ENCODE measurements at regions of chr6 and their contacts with region 1.

Region 1: DNA sequence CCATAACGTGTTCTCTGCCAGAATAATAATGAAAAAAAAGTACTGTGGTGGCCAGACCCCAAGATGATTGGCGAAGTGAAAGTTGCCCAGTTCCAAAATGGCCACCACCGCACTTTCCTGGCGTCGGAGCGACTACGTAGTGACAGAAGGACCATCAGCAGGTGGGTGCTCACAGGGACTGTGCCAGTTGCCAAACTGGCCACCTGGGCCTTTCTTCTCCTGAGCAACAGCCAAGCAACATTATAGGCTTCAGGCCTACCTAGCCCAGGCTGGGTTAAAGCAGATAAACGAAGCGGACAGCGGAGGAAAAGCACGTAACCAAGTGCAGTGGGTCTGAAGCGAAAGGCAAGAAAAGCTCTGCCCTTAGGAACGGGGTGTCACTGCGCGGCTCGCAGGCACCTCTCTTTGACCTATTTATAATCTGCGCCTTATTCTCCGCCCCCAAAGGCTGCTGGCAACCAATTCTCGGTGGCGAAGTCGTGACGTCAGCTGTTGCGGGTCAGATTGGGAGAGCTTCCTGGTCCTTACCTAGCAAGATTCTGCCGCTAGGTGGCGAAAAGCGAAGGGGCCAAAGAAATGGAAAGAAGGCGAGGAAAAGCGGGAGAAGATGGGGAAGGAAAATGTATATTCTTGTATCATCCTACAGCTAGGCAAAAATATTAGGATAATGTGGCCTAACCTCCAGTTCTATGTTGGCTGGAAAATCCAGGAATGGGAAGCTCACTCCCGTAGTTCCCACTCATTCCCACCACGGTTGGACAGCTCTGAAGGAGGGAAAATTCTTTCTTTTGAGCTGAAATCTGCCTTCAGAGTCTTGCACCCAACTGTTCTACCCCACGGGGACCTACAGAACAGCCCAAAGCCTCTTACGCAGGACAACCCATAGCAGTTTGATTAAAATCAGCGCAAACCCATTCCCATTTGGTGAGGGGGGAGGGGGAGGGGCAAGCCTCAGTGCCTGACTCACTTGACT is 6.9 kb upstream of the MOG start:
- DNase-seq: peak; percentile 99
- ATAC-seq: peak; percentile 94
- H3K4me3 ChIP-seq: peak overlapping the region; percentile 72
- H3K27ac ChIP-seq: no peak overlapping the region
- H3K4me1 ChIP-seq: no peaks in the 10 kb centered on the region; the same call in none of the 2 replicates
- H3K27me3 ChIP-seq: no peaks in the 10 kb centered on the region
- CTCF ChIP-seq: peak; percentile 90

Region 2: DNA sequence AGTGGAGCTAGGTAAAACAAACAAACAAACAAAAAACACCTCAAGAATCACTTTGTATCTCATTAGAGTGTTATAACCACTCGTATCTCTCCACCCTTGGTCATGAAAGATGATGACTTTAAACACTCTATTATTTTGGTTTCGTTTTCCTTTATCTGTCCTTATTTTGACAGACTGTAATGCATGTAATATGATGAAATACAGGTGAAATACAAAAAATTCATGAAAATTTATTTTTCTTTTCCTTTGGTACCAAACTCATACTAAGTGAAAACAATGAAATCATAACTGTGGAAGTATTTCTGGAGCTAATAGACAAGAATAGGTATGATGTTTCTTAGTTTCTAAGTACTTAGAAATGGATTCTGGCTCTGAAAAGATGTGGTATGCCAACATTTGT is 250.5 kb before region 1 on chr6:
- CTCF ChIA-PET with region 1: no interaction called
- POLR2A ChIA-PET with region 1: no interaction called
- intact Hi-C with region 1: no loop called
- DNase-seq: no peak
- ATAC-seq: no peak
- H3K4me3 ChIP-seq: no peak overlapping the region
- H3K27ac ChIP-seq: no peak overlapping the region
- H3K4me1 ChIP-seq: no peaks in the 10 kb centered on the region
- H3K27me3 ChIP-seq: peaks cover 34% of the 10 kb centered on the region
- CTCF ChIP-seq: no peak

Region 3: DNA sequence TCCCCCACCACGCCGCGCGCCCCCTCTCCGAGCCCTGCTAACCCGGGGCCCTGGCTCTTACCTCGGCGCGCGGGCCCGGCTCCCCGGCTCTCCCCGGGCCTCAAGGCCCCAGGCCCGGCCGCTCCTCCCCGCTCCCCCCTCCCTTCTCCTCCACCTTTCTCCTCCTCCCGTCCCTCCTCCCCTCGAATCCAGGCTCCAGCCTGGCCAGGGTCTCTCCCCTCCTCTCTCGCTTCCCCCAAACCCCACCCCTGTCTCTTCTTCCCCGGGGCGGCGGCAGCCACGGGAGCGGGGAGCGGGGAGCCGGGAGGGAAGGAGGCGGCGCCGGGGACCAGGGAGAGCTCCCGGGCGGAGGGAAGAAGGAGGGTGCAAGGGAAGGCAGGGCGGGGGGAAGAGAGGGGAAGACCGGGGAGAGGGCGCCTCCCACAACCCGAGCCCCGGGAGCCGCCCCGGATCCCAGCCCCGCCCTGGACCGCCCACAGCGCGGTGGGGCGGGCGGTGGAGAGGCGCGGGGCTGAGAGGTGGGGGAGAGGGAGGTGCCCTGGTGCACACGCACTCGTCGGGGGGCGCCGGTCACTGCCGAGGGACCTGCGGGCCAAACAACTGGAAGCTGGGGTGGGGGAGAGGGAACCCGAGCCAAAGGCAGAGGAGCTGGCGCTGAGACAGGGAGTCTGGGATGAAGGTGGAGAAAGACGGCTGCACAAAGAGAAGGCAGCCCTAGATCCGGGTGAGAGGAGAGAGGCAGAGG is 17.0 kb before region 1 on chr6 and contains the start of gene GABBR1:
- CTCF ChIA-PET with region 1: interaction called, 16 read pairs
- POLR2A ChIA-PET with region 1: interaction called, 14 read pairs
- intact Hi-C with region 1: loop called (anchors 2 kb)
- DNase-seq: peak; percentile 77
- ATAC-seq: peak; percentile 79
- H3K4me3 ChIP-seq: peak within 1 kb of the TSS; percentile 95
- H3K27ac ChIP-seq: no peak within 1 kb of the TSS
- H3K4me1 ChIP-seq: peaks cover 20% of the 10 kb centered on the region
- H3K27me3 ChIP-seq: no peaks in the 10 kb centered on the region
- CTCF ChIP-seq: no peak
- total RNA-seq, gene GABBR1: 5.5 and 7.0 TPM in 2 replicates

Region 4: DNA sequence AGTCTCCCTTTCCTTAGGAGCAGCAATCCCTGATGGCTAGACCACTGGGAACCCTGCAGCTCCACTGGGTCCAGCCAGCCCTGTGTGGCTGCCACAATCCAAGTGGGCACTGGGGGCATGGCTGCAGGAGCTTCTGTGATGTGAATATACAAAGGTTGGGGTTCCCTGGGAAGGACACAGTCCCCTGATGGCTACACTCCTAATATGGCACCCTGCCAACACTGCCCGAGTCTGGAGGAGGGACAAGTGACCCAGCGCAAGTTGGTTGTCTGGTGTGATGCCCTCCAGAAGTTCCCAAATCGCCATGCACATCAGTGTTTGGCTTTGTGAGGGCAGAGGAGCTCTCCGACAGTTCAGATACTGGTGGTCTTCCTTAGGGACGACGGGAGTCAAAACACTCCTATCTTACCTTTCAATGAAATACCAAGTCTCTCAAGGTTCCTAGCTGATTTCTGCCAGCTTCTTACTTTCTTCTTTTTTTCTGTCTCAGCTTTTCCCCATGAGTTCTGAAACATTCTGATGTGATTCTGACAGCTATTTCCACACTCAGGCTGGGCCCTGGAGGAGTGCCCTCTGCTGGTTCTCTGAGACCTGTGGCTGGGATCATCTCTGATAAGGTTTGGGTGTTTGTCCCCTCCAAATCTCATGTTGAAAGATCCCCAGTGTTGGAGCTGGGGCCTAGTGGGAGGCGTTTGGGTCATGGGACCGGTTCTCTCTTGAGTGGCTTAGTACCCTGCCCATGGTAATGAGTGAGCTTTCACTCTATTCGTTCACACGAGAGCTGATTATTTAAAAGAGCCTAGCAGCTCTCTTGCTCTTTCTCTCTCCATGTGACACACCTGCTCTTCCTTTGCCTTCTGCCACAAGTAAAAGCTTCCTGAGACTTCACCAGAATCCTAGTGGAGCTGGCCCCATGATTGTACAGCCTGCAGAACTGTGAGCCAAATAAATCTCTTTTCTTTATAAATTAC is 46.5 kb after region 1 on chr6:
- CTCF ChIA-PET with region 1: interaction called, 24 read pairs
- POLR2A ChIA-PET with region 1: no interaction called
- intact Hi-C with region 1: loop called (anchors 1 kb)
- DNase-seq: peak; percentile 48
- ATAC-seq: peak; percentile 63
- H3K4me3 ChIP-seq: no peak overlapping the region
- H3K27ac ChIP-seq: no peak overlapping the region
- H3K4me1 ChIP-seq: no peaks in the 10 kb centered on the region
- H3K27me3 ChIP-seq: no peaks in the 10 kb centered on the region
- CTCF ChIP-seq: peak; percentile 74

Region 5: DNA sequence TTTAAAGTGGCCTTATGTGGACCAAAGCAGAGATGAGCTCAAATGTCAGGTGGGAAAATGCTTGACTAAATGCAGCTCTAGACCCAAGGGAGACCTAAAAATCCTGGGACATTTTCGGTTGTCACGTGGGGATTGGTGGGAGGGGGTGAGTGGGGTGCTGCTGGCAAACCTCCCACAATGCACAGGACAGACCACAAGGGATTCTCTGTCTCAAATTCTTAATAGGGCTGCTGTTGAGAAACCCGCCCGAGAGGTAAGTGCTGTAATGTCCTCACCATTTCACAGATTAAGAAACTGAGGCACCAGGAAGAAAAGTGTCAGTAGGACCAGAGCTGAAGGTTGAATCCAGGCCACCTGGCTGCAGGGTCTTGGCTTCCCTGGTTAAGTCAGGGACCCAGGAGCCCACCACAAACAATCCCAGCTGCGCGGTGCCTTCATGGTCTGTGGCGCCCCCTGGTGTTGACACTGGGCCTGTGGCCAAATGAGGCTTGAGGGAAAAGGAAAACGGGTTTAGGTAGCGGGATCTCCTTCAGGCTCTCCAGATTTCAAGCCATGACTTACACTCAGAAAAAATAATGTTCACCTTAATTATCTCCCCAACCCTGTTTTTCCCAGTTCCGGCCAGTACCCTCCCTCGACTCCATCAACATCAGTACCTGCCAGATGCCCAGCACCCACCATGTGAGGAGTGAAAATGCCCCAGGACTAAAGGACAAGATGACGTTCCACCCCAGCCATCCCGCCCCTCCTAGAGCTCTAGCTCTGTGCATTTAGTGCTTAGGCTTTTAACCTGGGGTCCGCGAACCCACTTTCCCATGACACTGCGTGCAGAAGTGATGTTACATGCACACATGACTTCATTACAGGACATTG is 184.8 kb after region 1 on chr6:
- CTCF ChIA-PET with region 1: interaction called, 6 read pairs
- POLR2A ChIA-PET with region 1: no interaction called
- intact Hi-C with region 1: loop called (anchors 5 kb)
- DNase-seq: peak; percentile 62
- ATAC-seq: peak; percentile 70
- H3K4me3 ChIP-seq: no peak overlapping the region
- H3K27ac ChIP-seq: no peak overlapping the region
- H3K4me1 ChIP-seq: no peaks in the 10 kb centered on the region
- H3K27me3 ChIP-seq: peaks cover 5% of the 10 kb centered on the region
- CTCF ChIP-seq: peak; percentile 90

Region 6: DNA sequence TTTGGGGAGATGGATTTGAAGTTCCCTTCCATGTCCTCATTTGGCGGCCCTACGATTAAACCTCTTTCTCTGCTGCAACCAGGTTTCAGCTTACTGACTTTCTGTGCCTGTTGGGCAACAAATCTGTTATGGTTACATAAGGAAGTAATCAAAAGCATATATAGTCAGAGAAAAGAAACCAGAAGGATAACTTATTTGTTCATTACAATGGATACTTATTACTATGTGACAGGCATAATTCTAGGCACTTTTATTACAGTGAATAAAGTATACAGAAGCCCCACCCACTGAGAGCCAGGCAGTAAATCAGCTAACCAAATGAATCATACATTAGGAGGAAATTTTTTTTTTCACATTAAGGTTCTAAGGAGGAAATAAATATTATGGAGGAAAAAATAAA is 472.5 kb after region 1 on chr6:
- CTCF ChIA-PET with region 1: interaction called, 10 read pairs
- POLR2A ChIA-PET with region 1: no interaction called
- intact Hi-C with region 1: no loop called
- DNase-seq: peak; percentile 20
- ATAC-seq: peak; percentile 25; the same call in 1 of the 2 replicates
- H3K4me3 ChIP-seq: no peak overlapping the region
- H3K27ac ChIP-seq: no peak overlapping the region
- H3K4me1 ChIP-seq: peaks cover 16% of the 10 kb centered on the region
- H3K27me3 ChIP-seq: no peaks in the 10 kb centered on the region
- CTCF ChIP-seq: no peak

Region 7: DNA sequence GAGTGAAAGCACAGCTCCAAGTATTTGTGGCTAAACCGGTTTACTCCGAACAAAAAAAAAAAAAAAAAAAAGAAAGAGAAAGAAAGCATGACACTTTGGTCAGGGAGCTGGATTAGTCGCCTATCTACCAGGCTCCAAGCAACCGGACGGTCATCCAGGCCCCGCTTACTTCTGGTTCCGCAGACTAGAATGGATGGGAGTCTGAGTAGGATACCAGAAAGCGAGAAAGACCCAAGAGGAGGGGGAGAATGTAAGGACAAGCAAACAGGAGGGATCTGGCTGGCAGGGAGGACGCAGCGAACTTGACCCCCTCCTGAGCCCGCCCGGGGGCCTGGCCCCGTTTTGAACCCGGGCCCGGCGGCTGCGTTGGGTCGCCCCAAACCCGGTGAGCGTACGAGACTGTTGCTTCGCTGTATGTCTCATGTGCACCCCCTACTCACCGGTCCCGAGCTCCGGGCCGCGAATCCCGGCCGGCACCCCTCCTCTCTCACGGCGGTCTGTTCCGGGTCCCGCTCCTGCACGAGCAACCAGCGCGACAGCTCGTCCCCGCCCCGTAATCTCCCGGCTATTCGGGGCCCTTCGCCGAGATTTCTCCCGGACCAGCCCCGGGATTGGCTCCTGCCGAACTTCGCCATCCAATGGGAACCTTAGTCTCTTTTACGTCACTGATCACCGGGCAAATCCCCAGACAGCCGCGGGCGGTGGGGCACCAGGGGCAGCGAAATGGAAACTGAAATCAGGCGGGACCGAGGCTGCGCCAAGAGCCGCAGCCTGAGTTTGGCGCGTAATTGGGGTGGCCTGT is 563.1 kb after region 1 on chr6 and contains the start of gene TRIM26:
- CTCF ChIA-PET with region 1: no interaction called
- POLR2A ChIA-PET with region 1: interaction called, 13 read pairs
- intact Hi-C with region 1: no loop called
- DNase-seq: peak; percentile 99
- ATAC-seq: peak; percentile 88
- H3K4me3 ChIP-seq: peak within 1 kb of the TSS; percentile 84
- H3K27ac ChIP-seq: peak within 1 kb of the TSS; percentile 67
- H3K4me1 ChIP-seq: peaks cover 26% of the 10 kb centered on the region
- H3K27me3 ChIP-seq: no peaks in the 10 kb centered on the region
- CTCF ChIP-seq: no peak
- total RNA-seq, gene TRIM26: 48.1 and 56.0 TPM in 2 replicates

Measured in PC-3 (cell line).